T-cell (primary cell): ENCODE measurements at regions of chr4 and their contacts with region 1.

Region 1: GRCh38 chr4:60116588-60116987 is 1083.5 kb upstream of the ADGRL3 start:
- DNase-seq: no peak
- ATAC-seq: no peak
- H3K4me3 ChIP-seq: no peak overlapping the region
- H3K4me3 Mint-ChIP-seq: no peak overlapping the region
- H3K27ac ChIP-seq: no peak overlapping the region
- H3K27ac Mint-ChIP-seq: no peak overlapping the region
- H3K4me1 ChIP-seq: no peaks in the 10 kb centered on the region
- H3K4me1 Mint-ChIP-seq: no peaks in the 10 kb centered on the region
- H3K27me3 ChIP-seq: no peaks in the 10 kb centered on the region
- H3K27me3 Mint-ChIP-seq: no peaks in the 10 kb centered on the region

Region 2: GRCh38 chr4:60078984-60079383 is 37.6 kb before region 1 on chr4:
- CTCF ChIA-PET with region 1: no interaction called
- POLR2A ChIA-PET with region 1: interaction called in 1 of 2 experiments, 11 read pairs
- DNase-seq: no peak
- ATAC-seq: no peak
- H3K4me3 ChIP-seq: no peak overlapping the region
- H3K4me3 Mint-ChIP-seq: no peak overlapping the region
- H3K27ac ChIP-seq: no peak overlapping the region
- H3K27ac Mint-ChIP-seq: no peak overlapping the region
- H3K4me1 ChIP-seq: no peaks in the 10 kb centered on the region
- H3K4me1 Mint-ChIP-seq: no peaks in the 10 kb centered on the region
- H3K27me3 ChIP-seq: no peaks in the 10 kb centered on the region
- H3K27me3 Mint-ChIP-seq: no peaks in the 10 kb centered on the region